ENCODE measurements at regions of chr17 and their contacts with region 1.

Region 1: GRCh38 chr17:10149573-10150399 is 48.6 kb downstream of the GAS7 start:
- DNase-seq: peak; percentile 16
- H3K4me3 ChIP-seq: no peak overlapping the region
- H3K27ac ChIP-seq: no peak overlapping the region
- H3K4me1 ChIP-seq: no peaks in the 10 kb centered on the region
- H3K27me3 ChIP-seq: no peaks in the 10 kb centered on the region
- CTCF ChIP-seq: no peak

Region 2: DNA sequence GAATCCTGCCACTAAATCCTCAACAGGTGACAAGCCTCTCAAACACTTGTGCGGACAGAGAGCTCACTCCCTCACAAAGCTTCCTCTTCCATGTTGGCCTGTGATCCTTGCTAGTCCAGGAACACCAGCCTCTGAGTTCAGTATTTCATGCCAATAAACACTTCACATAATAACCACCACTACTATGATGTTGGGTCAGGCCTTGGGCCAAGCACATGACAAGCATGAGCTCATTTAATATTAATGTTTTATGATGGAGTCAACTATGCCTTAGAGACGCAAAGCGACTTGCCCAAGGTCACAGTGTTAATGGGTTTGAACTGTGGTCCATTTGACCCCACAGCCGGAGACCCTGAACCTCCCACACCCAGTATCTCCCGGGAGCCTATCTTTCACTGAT is 80.5 kb before region 1 on chr17:
- CTCF ChIA-PET with region 1: no interaction called
- dilution Hi-C with region 1: loop called (anchors 5 kb)
- in situ Hi-C with region 1: no loop called
- intact Hi-C with region 1: no loop called
- DNase-seq: no peak
- H3K4me3 ChIP-seq: no peak overlapping the region
- H3K27ac ChIP-seq: no peak overlapping the region
- H3K4me1 ChIP-seq: peaks cover 2% of the 10 kb centered on the region
- H3K27me3 ChIP-seq: no peaks in the 10 kb centered on the region
- CTCF ChIP-seq: no peak

Region 3: DNA sequence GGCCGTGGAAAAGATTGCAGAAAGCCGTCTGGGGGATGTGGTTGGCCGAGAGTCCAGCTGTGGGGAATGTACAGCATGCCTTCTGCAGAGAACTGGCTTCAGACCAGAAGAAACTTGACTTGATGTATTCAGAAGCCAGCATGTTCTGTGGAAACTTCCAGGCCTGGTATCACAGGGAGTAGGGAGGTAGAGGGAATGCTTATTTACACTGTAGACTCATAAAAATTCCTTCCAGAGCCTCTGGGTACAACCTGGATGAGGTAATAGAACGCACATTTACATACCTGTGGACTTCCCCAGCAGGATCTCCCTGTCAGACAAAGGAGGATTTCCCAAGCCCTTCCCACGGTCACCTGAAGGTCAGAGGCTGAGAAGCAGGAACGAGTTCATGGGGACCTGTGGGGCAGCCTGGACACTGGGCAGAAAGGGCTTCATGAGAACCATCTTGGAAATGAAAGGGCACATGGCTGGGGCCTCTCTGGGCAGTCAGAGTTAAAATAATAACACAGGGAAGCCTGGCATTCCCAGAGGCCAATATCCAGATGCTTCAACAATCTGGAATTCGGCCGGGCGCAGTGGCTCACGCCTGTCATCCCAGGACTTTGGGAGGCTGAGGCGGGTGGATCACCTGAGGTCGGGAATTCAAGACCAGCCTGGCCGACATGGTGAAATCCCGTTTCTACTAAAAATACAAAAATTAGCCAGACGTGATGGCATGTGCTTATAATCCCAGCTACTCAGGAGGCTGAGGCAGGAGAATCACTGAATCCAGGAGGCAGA is 60.6 kb after region 1 on chr17:
- CTCF ChIA-PET with region 1: no interaction called
- dilution Hi-C with region 1: no loop called
- in situ Hi-C with region 1: no loop called
- intact Hi-C with region 1: no loop called
- DNase-seq: peak; percentile 21
- H3K4me3 ChIP-seq: no peak overlapping the region
- H3K27ac ChIP-seq: no peak overlapping the region
- H3K4me1 ChIP-seq: no peaks in the 10 kb centered on the region
- H3K27me3 ChIP-seq: no peaks in the 10 kb centered on the region
- CTCF ChIP-seq: no peak

Measured in mammary epithelial cell (primary cell).